Activated CD4-positive, alpha-beta memory T cell treated with anti-CD3 and anti-CD28 coated beads for 36 hours (primary cell): ENCODE measurements at regions of chr12 and their contacts with region 1.

Region 1: GRCh38 chr12:124609041-124609995 is 41.9 kb upstream of the NCOR2 start:
- DNase-seq: peak; percentile 89
- H3K4me3 Mint-ChIP-seq: peak overlapping the region; percentile 7
- H3K27ac Mint-ChIP-seq: no peak overlapping the region
- H3K4me1 Mint-ChIP-seq: peaks cover 30% of the 10 kb centered on the region
- H3K27me3 Mint-ChIP-seq: peaks cover 3% of the 10 kb centered on the region

Region 2: DNA sequence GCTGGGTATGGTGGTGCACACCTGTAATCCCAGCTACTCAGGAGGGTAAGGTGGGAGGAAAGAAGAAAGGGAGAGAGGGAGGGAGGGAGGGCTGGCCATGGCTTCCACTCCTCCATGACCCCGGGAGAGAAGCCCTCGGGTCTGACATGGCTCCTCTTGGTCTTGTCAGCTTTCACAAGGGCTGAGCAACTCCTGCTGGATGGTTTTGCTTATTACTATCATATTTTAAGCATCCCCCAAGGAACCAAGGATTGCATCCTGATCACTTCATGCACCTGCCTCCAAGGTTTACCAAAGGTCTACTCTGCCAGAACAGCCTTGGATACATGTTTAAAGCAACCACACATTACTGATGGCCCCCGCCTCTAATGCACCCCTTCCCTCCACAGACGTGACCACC is 13.9 kb before region 1 on chr12:
- CTCF ChIA-PET with region 1: no interaction called
- POLR2A ChIA-PET with region 1: no interaction called
- intact Hi-C with region 1: no loop called
- DNase-seq: no peak
- H3K4me3 Mint-ChIP-seq: no peak overlapping the region
- H3K27ac Mint-ChIP-seq: no peak overlapping the region
- H3K4me1 Mint-ChIP-seq: peaks cover 10% of the 10 kb centered on the region
- H3K27me3 Mint-ChIP-seq: peaks cover 22% of the 10 kb centered on the region

Region 3: GRCh38 chr12:124636138-124636978 is 27.0 kb after region 1 on chr12:
- CTCF ChIA-PET with region 1: no interaction called
- POLR2A ChIA-PET with region 1: no interaction called
- intact Hi-C with region 1: loop called (anchors 1 kb)
- DNase-seq: peak; percentile 87
- H3K4me3 Mint-ChIP-seq: no peak overlapping the region
- H3K27ac Mint-ChIP-seq: no peak overlapping the region
- H3K4me1 Mint-ChIP-seq: peaks cover 16% of the 10 kb centered on the region
- H3K27me3 Mint-ChIP-seq: peaks cover 2% of the 10 kb centered on the region

Region 4: GRCh38 chr12:124767066-124767821 is 157.9 kb after region 1 on chr12:
- CTCF ChIA-PET with region 1: no interaction called
- POLR2A ChIA-PET with region 1: no interaction called
- intact Hi-C with region 1: no loop called
- DNase-seq: peak; percentile 88
- H3K4me3 Mint-ChIP-seq: no peak overlapping the region
- H3K27ac Mint-ChIP-seq: no peak overlapping the region
- H3K4me1 Mint-ChIP-seq: peaks cover 18% of the 10 kb centered on the region
- H3K27me3 Mint-ChIP-seq: peaks cover 15% of the 10 kb centered on the region